ENCODE measurements at regions of chr9 and their contacts with region 1.

Region 1: DNA sequence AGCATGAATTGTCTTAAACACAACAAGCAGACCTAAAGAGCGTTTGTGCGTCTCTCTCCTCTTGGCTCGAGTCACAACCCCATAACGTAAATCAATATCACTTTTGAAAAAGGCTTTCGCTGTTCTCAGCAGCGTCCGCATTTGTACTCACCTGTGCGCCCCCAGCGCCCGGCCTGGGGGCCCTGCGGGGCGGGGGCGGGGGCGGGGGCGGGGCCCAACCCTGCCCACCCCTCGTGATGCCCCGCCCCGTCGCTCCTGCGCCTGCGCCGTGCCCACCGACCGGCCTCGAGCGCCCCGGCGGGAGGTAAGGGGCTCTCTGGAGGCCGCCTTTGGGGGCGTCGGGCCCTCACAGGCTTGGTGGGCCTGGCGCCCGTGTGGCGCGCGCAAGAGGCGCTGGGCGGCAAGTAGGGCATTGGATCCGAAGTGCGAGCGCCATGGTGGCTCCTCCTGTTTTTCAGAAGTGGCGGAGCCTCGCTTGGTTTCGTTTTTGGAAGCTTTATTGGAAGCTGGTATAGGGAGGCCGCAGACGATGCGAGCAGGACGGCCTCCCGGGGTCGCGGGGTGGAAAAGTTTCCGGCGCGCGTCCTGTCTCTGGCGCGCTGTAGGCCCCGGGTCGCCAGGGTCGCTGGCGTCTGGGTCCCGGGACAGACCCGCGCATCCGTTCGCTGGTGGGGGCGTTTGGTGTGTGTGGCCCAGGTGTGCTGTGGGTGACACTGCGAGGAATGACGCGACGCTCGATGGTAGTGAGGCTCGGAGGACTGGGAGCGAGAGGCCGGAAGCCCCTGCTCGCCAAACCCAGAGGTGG is at the start of gene STX17:
- DNase-seq: peak; percentile 80 to 90 (median 83)
- ATAC-seq: peak; percentile 79 to 98 (median 97)
- H3K4me3 ChIP-seq: peak within 1 kb of the TSS; percentile 62 to 100 (median 92)
- H3K27ac ChIP-seq: peak within 1 kb of the TSS; percentile 90 to 99 (median 96)
- H3K4me1 ChIP-seq: peaks cover 0 to 27% (median 13%) of the 10 kb centered on the region in 12 donors
- H3K27me3 ChIP-seq: no peaks in the 10 kb centered on the region
- CTCF ChIP-seq: peak in 2 of 12 donors; percentile 7 to 21
- POLR2A ChIP-seq: peak; percentile 34 to 77
- total RNA-seq, gene STX17: 15.4 to 29.1 (median 23.7) TPM

Region 2: GRCh38 chr9:99842797-99843196 is 63.8 kb before region 1 on chr9:
- intact Hi-C with region 1: no loop called
- DNase-seq: no peak
- ATAC-seq: no peak
- H3K4me3 ChIP-seq: no peak overlapping the region
- H3K27ac ChIP-seq: no peak overlapping the region
- H3K4me1 ChIP-seq: no peaks in the 10 kb centered on the region
- H3K27me3 ChIP-seq: no peaks in the 10 kb centered on the region
- CTCF ChIP-seq: no peak
- POLR2A ChIP-seq: no peak

Region 3: DNA sequence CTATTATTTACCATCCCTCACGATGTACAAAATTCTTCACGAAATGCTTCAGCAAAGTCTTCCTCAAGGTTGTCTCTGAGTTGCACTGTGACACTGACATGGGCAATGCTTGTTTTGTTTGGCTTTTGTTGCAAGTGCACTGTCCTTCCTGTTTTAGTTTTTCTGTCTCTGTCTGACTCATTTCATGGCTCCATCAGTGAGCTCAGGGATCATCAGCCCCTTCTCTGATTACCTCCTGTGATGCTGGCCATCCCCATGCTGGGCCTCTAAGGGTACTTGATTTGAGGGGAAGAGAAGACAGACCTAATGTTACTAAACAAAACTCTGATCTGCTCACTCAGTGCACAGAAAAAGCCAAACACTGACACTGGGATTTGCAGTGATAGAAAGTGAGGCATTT is 37.8 kb before region 1 on chr9:
- intact Hi-C with region 1: no loop called
- DNase-seq: no peak
- ATAC-seq: no peak
- H3K4me3 ChIP-seq: no peak overlapping the region
- H3K27ac ChIP-seq: no peak overlapping the region
- H3K4me1 ChIP-seq: peaks cover 0 to 11% (median 0%) of the 10 kb centered on the region in 12 donors
- H3K27me3 ChIP-seq: no peaks in the 10 kb centered on the region
- CTCF ChIP-seq: no peak
- POLR2A ChIP-seq: no peak

Region 4: DNA sequence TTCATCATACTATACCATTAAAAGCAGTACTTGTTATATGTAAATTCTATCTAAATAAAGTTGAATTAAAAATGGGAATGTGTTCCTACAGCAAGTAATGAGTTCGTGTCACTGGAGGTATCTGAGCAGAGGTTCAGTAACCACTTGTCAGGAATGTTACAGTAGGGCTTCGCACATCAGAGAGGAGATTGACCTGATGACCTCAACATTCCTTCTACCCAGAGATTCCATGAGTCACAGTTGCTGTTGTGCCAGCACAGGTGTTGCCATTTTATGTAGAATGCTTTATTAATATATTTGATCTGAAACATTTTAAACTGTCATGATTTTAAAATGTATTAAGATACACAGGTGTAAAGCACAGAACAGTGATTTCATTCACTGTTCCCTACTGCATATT is 60.1 kb after region 1 on chr9:
- intact Hi-C with region 1: no loop called
- DNase-seq: no peak
- ATAC-seq: no peak
- H3K4me3 ChIP-seq: no peak overlapping the region
- H3K27ac ChIP-seq: no peak overlapping the region
- H3K4me1 ChIP-seq: no peaks in the 10 kb centered on the region
- H3K27me3 ChIP-seq: no peaks in the 10 kb centered on the region
- CTCF ChIP-seq: no peak
- POLR2A ChIP-seq: no peak

Region 5: DNA sequence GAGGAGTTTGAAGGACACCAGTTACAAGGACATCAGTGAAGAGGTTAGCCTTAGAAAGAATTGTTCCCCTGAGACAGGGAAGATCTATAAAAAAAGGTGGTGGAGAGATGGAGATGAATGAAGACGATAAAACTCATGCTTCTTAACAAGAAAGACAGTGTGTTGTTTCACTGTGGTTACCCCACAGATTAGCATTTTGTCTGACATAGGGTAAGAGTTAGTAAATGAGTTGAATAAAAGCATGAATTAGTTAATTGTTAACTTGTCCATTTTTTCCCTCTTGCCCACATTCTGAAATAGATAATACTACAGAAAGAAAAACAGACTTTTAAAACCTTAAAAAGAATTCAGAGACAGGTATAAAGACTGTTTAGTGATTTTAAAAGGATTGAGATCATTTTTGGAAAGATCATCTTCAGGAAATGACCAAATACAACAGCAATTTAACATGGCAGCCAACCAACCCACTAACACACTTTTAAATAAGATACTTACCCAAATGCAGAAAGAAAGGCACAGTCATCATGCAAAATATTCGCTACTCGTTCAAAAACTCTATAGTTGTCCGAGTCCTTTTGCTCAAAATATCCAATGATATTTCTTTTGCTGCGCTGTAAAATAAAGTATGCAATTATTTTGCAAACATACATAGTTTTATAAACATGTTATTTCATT is 113.7 kb after region 1 on chr9:
- intact Hi-C with region 1: loop called in 1 of 10 experiments (anchors 5 kb)
- DNase-seq: no peak
- ATAC-seq: no peak
- H3K4me3 ChIP-seq: no peak overlapping the region
- H3K27ac ChIP-seq: no peak overlapping the region
- H3K4me1 ChIP-seq: peaks cover 0 to 6% (median 0%) of the 10 kb centered on the region in 12 donors
- H3K27me3 ChIP-seq: no peaks in the 10 kb centered on the region
- CTCF ChIP-seq: no peak
- POLR2A ChIP-seq: no peak

Measured in heart left ventricle (tissue), 16 donors.